Endothelial cell of umbilical vein (primary cell): ENCODE measurements at regions of chr5 and their contacts with region 1.

Region 1: DNA sequence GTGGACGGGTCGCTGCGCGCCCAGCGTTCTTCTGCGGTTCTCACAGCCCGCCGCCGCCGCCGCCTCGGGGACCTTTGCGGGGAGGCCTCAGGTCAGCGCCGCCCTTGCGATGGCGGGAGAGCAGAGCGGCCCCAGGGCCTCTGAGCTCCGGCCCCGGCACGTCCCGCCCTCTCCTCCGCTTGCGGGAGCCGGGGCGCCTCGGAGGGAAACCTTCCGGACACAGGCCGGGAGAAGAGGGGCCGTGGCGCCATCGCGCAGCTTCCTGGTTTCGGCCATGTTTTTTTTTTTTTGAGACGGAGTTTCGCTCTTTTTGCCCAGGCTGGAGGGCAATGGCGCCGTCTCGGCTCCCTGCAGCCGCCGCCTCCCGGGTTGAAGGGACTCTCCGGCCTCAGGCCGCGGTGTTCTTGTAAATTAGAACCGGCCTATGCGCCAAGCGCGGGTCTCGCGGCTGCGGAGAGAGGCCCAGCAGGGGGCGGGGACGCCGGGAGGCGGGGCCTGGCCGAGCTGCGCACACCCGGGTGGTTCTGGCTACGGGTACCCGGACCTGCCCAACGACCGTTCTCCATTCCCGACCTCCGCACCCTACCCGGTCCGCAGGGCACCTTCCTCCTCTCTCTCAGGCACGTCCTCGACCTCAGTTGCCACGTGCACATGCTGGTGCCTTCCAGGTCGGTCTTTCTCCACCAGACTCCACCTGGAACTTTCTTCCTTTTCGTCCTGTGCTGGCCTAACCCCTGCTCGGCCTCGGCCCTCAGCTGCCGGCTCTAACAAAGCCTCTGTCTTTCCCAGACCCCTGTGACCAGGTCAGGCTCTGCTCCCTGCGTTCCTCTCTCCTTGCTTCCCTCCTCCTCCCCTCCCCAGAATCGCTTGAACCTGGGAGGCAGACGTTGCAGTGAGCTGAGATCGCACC is 28.8 kb upstream of the MGAT1 start:
- DNase-seq: peak; percentile 80
- H3K4me3 ChIP-seq: peak overlapping the region; percentile 51 to 63 (median 59)
- H3K27ac ChIP-seq: peak overlapping the region; percentile 69
- H3K4me1 ChIP-seq: peaks cover 10% of the 10 kb centered on the region
- H3K27me3 ChIP-seq: no peaks in the 10 kb centered on the region
- CTCF ChIP-seq: peak in 1 of 2 donors; percentile 32
- POLR2A ChIP-seq: peak; percentile 87

Region 2: DNA sequence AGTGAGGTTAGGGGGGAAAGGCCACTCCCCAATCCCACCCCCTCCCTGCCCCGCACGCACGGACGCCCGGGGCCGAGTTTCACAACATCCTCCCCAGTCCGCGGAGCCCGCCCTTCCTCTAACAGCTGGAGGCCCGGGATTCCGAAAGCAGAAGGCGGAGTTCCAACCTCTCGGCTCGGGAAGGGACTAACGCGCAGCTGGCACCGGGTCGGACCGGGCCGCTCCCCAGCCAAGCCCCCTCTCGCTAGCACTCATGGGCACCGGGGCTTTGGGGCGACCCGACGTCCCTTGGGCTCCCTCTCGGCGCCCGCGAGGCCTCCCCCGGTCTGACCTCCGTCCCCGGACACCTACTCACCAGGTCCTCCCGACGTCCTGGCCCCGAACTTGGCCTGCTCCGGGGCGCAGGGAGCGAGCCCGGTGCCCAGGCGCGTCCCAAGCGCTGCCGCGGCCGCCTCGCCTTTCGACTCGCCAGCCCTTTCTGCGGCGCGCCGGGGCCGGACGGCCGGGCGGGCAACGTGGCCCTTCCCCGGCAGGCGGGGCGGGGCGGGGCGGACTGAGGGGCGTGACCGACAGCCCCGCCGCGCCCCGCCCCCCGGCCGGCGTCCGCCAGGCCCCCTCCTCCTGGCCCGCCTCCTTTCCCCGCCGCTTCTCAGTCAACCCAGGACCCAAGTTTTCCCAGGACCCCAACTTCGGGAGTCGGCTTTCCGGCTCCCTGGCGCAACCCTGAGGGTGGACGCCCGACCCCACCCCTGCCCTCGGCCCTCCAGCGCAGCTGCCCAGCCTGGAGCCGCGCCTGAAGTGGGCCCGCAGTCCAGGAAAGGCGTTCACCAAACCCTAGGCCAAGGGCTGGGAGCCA is 28.8 kb before region 1 on chr5 and contains the start of gene MGAT1:
- CTCF ChIA-PET with region 1: interaction called, 4 read pairs
- POLR2A ChIA-PET with region 1: interaction called, 6 read pairs
- dilution Hi-C with region 1: no loop called
- intact Hi-C with region 1: loop called (anchors 2 kb)
- DNase-seq: peak; percentile 87
- H3K4me3 ChIP-seq: peak within 1 kb of the TSS; percentile 46 to 98 (median 69)
- H3K27ac ChIP-seq: peak within 1 kb of the TSS; percentile 67
- H3K4me1 ChIP-seq: peaks cover 44% of the 10 kb centered on the region
- H3K27me3 ChIP-seq: no peaks in the 10 kb centered on the region
- CTCF ChIP-seq: no peak
- POLR2A ChIP-seq: peak; percentile 85
- total RNA-seq, gene MGAT1: 108 and 123 TPM in 2 replicates

Region 3: DNA sequence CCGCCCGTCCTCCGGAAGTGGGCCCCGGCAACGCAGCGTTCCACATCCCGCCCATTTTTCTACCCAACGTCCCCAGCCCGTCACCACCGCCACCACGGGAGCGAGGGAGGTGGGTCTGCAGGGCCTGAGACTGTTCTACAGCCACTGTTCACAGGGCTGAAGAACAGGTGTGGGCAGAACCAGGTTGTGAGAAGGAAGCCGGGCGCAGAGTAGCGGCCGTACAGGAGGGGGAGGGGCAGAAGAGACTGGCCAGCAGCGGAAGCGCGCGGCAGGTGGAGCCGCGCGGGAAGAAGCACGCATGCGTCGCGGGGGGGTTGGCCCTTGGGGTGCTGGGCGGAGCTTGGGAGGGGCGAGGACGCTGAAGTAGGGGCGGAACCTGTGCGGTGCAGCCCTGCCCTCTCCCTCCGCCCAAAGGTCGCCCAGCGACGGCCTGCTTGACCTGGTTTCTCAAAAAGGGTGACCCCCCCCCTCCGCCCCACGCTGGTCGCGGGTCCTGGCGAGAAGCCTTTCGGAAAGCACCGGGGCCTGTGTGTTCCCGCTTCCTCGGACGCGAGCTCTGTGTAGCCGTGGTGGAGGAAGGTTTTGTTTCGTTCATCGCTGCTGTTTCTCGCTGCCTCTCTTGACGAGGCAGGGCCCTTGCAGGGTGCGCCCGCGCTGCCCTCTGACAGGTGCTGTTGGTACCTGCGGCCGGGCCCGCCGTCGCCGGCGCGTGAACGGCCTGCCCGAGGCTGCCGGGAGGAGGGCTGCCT is 21.0 kb before region 1 on chr5:
- CTCF ChIA-PET with region 1: interaction called, 7 read pairs
- POLR2A ChIA-PET with region 1: interaction called, 3 read pairs
- dilution Hi-C with region 1: no loop called
- intact Hi-C with region 1: loop called (anchors 1 kb)
- DNase-seq: peak; percentile 95
- H3K4me3 ChIP-seq: peak overlapping the region; percentile 43 to 72 (median 60)
- H3K27ac ChIP-seq: peak overlapping the region; percentile 88
- H3K4me1 ChIP-seq: peaks cover 38% of the 10 kb centered on the region
- H3K27me3 ChIP-seq: no peaks in the 10 kb centered on the region
- CTCF ChIP-seq: no peak
- POLR2A ChIP-seq: peak; percentile 56

Region 4: DNA sequence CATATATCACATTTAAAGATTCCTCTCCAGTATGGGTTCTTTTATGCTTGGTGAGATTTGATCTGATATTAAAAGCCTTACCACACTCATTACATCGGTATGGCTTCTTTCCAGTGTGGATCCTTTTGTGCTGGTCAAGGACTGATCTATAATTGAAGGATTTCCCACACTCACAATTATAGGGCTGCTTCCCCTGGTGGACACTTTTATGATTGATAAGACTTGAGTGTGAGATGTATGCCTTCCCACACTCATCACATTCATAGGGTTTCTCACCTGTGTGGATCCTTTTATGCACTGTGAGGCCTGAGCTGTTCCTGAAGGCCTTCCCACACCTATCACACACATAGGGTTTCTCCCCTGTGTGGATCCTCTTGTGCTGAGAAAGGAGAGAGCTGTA is 17.5 kb after region 1 on chr5:
- CTCF ChIA-PET with region 1: no interaction called
- POLR2A ChIA-PET with region 1: no interaction called
- dilution Hi-C with region 1: no loop called
- intact Hi-C with region 1: no loop called
- DNase-seq: no peak
- H3K4me3 ChIP-seq: no peak overlapping the region
- H3K27ac ChIP-seq: no peak overlapping the region
- H3K4me1 ChIP-seq: peaks cover 6% of the 10 kb centered on the region
- H3K27me3 ChIP-seq: no peaks in the 10 kb centered on the region
- CTCF ChIP-seq: no peak
- POLR2A ChIP-seq: no peak